Activated CD8-positive, alpha-beta T cell treated with anti-CD3 and anti-CD28 coated beads for 36 hours (primary cell): ENCODE measurements at regions of chr9 and their contacts with region 1.

Region 1: DNA sequence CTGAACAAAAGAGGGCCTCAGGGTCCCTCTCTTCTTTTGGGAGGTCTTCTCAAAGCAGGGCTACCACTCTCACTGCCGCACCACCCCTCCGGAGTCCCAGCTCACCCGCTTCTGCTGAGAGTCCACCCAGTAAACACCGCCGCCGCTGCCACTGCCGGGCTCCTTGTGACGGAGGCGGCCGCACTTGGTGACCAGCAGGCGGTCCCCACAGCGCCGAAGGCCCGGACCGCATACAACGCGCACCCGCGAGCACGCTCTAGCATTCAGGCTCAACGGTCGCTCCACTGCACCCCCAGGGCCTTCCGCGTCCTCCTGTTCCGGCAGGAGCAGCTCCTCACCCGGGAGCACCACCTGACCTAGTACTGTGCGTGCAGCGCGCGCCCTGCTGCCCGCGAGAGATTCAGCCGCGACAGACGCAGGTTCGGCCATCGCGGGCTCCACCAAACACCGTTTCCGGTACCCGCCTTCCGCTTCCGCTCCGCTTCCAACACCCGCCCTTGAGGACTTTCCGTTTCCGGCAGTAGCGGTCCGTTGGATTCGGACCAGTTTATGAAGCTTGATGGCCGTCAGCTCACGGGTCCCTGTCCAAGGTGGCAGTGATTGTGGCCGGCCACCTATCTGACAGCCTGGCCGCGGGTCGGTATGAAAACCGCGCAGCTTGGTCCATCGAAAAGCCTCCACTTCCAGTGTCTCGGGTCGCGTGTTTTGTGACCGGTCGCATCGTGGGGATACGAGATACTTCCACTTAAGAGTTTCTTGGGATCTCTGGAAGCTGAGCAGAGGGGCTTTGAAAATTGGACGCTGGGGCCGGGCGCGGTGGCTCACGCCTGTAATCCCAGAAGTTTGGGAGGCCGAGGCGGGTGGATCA is at the start of gene EXOSC3:
- DNase-seq: peak; percentile 92
- ATAC-seq: peak; percentile 88
- H3K4me3 Mint-ChIP-seq: peak within 1 kb of the TSS; percentile 98
- H3K27ac Mint-ChIP-seq: peak within 1 kb of the TSS; percentile 97
- H3K4me1 Mint-ChIP-seq: peaks cover 35% of the 10 kb centered on the region
- H3K27me3 Mint-ChIP-seq: peaks cover 2% of the 10 kb centered on the region
- CTCF ChIP-seq: no peak
- total RNA-seq, gene EXOSC3: 111 to 126 TPM

Region 2: GRCh38 chr9:37753489-37754190 is 31.2 kb before region 1 on chr9 and contains the start of gene TRMT10B:
- CTCF ChIA-PET with region 1: interaction called, 3 read pairs
- POLR2A ChIA-PET with region 1: interaction called, 14 read pairs
- intact Hi-C with region 1: loop called (anchors 2 kb)
- DNase-seq: peak; percentile 88
- ATAC-seq: peak; percentile 93
- H3K4me3 Mint-ChIP-seq: peak within 1 kb of the TSS; percentile 94
- H3K27ac Mint-ChIP-seq: peak within 1 kb of the TSS; percentile 93
- H3K4me1 Mint-ChIP-seq: peaks cover 22% of the 10 kb centered on the region
- H3K27me3 Mint-ChIP-seq: no peaks in the 10 kb centered on the region
- CTCF ChIP-seq: no peak
- total RNA-seq, gene TRMT10B: 10.6 to 12.0 TPM

Region 3: DNA sequence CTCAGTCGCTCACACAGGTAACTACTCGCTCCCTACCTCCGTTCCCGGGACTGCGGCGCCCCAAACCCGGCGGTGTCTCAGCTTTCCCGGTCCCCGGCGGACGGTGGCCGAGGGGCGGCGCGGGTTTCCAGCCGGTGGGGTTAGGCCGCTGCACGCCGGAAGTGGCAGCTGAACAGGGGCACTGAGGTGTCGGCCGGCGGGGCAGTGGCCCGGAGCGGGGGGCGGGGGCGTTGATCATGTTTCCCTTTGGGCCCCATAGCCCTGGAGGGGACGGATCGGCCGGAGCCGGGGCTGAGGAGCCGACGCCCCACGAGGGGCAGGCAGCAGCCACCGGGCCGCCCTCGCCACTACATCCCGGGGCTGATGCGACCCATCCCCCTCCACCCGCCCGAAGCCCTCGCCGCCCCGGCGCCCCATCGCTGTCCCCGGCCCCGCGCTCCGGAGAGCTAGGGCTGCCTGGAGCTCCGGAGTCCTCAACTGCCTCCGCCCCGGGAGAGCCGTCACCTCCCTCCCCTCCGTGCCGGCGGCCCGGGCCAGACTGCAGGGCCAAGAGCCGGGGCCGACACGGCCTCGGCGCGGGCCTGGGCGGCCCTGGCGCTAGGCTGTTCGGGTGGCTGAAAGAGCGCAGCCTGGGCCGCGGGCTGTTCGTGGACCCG is 15.9 kb after region 1 on chr9 and contains the start of gene DCAF10:
- CTCF ChIA-PET with region 1: interaction called, 3 read pairs
- POLR2A ChIA-PET with region 1: interaction called, 29 read pairs
- intact Hi-C with region 1: no loop called
- DNase-seq: peak; percentile 88
- ATAC-seq: peak; percentile 89
- H3K4me3 Mint-ChIP-seq: peak within 1 kb of the TSS; percentile 93
- H3K27ac Mint-ChIP-seq: peak within 1 kb of the TSS; percentile 89
- H3K4me1 Mint-ChIP-seq: peaks cover 36% of the 10 kb centered on the region
- H3K27me3 Mint-ChIP-seq: no peaks in the 10 kb centered on the region
- CTCF ChIP-seq: no peak
- total RNA-seq, gene DCAF10: 14.7 to 15.2 TPM

Region 4: DNA sequence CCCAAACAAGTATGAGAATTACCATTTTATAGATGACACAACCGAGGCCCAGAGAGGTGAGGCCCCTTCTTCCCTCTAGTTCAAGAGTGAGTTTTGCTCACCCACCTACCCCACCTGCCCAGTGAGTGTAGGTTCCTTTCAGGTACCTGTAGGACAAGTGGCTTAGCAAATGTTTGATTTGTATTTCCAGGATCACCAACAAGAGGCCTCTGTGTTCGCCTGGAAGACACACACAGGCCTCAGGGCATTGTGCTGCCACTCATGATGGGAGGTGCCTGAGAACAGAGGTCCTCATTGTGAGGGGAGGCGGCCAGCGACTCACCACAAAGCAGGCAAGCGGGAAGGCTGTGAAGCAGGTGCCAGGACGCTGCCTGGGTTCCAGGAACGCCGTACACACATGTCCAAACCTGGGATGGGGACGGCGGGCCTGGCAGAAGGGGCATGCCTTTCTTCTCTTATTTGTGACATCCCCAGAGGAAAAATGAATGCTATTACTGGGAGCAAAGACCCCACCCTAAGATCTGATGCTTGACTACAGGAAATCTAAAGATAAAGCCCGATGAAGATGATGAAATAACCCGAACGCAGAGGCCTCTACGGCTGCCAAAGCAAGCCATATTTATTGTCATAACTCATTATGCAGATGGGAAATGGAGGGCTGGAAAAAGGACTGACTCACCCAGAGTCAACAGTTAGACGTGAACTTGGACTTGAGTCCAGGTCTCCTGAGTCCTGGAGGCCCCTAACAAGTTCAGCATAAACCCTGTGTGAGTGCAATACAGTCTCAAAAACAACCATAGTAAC is 179.3 kb after region 1 on chr9:
- CTCF ChIA-PET with region 1: no interaction called
- POLR2A ChIA-PET with region 1: no interaction called
- intact Hi-C with region 1: no loop called
- DNase-seq: no peak
- ATAC-seq: peak; percentile 56
- H3K4me3 Mint-ChIP-seq: no peak overlapping the region
- H3K27ac Mint-ChIP-seq: no peak overlapping the region
- H3K4me1 Mint-ChIP-seq: peaks cover 17% of the 10 kb centered on the region
- H3K27me3 Mint-ChIP-seq: no peaks in the 10 kb centered on the region
- CTCF ChIP-seq: no peak